ENCODE measurements at regions of chrX and their contacts with region 1.

Region 1: DNA sequence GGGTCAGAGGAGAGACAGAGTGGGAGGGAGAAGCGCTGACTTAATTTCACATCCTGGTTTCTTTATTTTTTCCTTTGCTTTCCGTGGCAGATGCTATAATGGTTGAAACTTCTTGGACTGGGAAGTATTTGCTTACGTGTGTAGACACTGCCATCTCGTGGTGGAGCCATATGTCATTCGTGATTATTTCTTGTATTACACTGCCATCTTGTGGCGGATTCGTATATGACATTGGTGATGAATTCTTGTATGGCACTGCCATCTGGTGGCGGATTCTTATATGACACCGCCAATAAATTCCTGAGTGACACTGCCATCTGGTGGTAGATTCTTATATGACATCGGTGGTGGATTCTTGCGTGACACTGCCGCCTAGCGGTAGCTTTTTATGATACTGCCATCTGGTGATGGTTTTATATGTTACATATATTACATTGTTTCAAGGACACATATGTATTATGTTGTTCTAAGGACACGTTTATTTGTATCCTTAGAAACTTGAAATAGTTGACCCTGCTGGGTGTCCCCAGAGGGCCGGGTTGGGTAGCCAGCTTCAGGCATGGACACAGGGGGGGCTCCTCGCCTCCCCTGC is 37.3 kb upstream of the CLCN4 start:
- DNase-seq: peak; percentile 55
- CTCF ChIP-seq: peak; percentile 67

Region 2: GRCh38 chrX:9873952-9874351 is 245.5 kb before region 1 on chrX:
- CTCF ChIA-PET with region 1: interaction called, 34 read pairs
- POLR2A ChIA-PET with region 1: no interaction called
- DNase-seq: peak; percentile 56
- CTCF ChIP-seq: peak; percentile 58

Region 3: GRCh38 chrX:9995855-9996339 is 123.6 kb before region 1 on chrX:
- CTCF ChIA-PET with region 1: interaction called, 305 read pairs
- POLR2A ChIA-PET with region 1: interaction called, 6 read pairs
- DNase-seq: peak; percentile 72
- CTCF ChIP-seq: peak; percentile 77

Region 4: GRCh38 chrX:10023821-10024220 is 95.7 kb before region 1 on chrX:
- CTCF ChIA-PET with region 1: interaction called, 13 read pairs
- POLR2A ChIA-PET with region 1: no interaction called
- DNase-seq: no peak
- CTCF ChIP-seq: no peak

Region 5: DNA sequence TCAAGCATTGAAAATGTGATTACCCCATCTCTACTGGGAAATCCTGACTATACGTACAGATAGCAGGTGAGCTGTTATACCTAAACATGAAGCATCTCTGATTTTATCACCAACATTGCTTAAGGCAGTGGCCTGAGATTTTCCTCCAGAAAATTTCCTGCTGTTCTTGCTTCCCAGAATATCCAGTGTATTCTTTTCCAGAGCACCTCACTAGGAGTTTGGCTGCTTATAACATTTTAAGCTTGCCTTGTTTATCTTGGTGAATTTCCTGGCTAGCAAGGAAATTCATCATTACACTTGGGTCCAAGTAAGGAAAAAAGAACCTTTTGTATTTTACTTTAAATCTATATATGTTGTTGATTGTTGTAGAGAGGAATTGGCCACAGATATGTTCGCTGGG is 35.7 kb before region 1 on chrX:
- CTCF ChIA-PET with region 1: interaction called, 12 read pairs
- POLR2A ChIA-PET with region 1: no interaction called
- DNase-seq: no peak
- CTCF ChIP-seq: no peak

Region 6: GRCh38 chrX:10146346-10146745 is 26.9 kb after region 1 on chrX:
- CTCF ChIA-PET with region 1: interaction called, 11 read pairs
- POLR2A ChIA-PET with region 1: no interaction called
- DNase-seq: no peak
- CTCF ChIP-seq: no peak

Region 7: GRCh38 chrX:10326578-10326977 is 207.1 kb after region 1 on chrX:
- CTCF ChIA-PET with region 1: no interaction called
- POLR2A ChIA-PET with region 1: no interaction called
- DNase-seq: no peak
- CTCF ChIP-seq: peak; percentile 12

Region 8: GRCh38 chrX:11064851-11065600 is 945.5 kb after region 1 on chrX:
- CTCF ChIA-PET with region 1: no interaction called
- POLR2A ChIA-PET with region 1: no interaction called
- DNase-seq: no peak
- CTCF ChIP-seq: no peak

Measured in GM10248 (cell line).